ENCODE measurements at regions of chr17 and their contacts with region 1.

Region 1: GRCh38 chr17:47840740-47841603 is at the start of gene SCRN2:
- DNase-seq: no peak
- H3K4me3 ChIP-seq: peak within 1 kb of the TSS; percentile 69
- CTCF ChIP-seq: peak; percentile 95

Region 2: DNA sequence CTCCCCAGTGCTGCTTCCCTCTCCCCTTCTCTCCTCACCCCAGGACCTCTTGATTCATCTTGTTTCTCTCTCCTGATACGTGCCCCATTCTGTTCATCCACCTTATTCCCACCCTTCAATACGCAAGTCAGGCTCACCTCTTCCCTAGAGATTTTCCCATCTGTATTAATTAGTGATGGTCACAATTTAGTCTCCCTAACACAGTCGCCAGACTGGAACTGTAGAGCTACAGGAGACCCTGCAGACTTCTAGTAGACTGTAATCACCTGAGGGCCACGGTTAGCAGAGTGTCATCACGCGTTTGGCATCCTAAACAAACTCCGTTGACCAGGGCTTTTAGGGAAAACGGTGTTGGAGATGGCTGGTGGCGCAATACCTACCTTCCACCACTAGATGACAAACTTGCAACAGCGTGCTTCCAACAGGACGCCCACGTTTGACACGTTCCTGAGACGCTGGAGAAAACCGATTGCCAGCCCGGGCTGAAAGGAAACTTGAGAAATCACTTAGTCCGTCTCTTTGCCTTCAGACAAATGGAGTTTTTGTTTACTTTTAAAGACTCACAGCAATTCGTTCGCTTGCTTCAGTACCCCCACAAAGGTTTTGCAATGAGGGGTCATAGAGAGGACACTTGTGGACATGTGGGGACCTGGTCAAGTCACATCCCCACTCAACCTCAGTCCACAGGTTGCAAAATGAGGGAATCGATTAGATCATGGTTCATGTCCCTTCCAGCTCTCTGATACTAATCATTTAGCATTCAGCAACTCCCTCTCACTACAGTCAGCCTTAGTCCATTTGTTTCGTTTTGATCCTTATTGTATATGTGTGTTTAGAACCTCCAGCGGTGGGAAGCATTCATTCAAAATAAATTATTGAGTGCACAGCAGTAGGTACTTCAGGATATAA is 611.2 kb before region 1 on chr17:
- CTCF ChIA-PET with region 1: no interaction called
- POLR2A ChIA-PET with region 1: no interaction called
- DNase-seq: peak; percentile 79
- H3K4me3 ChIP-seq: peak overlapping the region; percentile 21; the same call in 1 of the 2 replicates
- CTCF ChIP-seq: peak; percentile 96

Region 3: DNA sequence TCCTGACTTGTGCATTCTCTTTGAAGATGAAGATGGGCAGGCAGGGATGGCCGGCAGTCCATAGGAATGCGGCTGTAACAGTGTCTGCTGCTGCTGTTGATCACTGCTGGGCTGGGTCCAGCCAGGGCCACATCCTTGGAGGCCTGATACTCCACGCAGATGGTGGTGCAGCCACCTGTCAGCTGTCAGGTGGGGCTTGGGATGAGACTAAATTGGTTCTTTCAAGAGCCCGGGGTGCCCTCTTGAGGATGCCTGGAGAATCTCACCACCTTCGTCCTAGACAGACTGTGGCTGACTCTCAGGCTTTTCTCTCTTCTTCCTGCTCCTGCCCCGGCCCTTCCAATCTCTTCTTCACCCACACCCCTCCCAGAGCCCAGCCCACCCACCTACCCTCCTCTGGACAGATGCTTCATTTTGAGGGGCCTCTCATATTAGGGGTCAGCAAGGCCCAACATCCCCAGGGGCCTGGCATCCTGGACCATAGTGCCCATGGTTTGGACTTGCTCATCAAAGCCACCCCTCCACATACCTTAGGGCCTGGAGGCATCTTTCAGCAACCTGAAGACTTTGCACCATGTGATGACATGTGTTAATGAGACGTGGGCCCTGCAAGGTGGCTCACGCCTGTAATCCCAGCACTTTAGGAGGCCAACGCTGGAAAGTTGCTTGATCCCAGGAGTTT is 38.5 kb before region 1 on chr17:
- CTCF ChIA-PET with region 1: no interaction called
- POLR2A ChIA-PET with region 1: no interaction called
- DNase-seq: no peak
- H3K4me3 ChIP-seq: no peak overlapping the region
- CTCF ChIP-seq: peak; percentile 69

Region 4: DNA sequence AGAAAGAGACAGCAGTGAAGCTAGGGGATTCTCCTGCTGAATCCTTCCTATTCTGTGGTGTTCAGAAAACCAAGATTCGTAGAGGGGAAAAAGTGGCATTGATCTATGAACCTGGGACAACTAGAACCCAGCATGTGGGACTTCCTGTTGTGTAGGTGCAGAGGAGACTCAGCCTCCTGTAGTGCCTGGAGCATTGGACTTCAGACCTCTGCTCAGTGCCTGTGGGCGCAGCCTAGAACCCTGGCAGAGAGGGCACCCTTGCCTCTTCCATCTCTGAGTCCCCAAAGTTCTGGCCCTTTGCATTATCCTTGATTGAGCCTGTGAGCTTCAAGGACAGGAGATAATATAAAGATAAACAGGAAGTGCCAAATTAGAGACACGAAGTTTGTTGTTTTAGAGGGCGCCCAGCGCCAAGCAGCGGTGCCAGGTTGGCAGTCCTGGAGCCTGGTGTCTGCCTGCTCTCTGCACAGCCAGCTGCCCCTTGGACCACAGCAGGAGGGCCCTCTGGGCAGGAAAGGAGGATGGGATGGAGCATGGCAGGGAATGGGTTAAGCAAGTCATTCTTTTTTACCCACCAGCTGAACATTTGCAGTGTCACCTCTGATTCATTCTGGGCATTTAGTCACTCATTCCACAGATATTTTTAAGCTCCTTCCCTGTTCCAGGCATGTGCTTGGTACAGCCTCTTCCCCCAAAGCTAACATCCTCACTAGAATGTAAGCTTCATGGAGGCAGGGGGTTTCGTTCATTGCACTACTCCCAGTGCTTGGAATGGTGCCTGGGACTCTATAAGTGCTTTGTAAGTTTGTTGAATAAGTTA is 21.9 kb after region 1 on chr17:
- CTCF ChIA-PET with region 1: interaction called, 208 read pairs
- POLR2A ChIA-PET with region 1: interaction called, 4 read pairs
- DNase-seq: peak; percentile 50
- H3K4me3 ChIP-seq: no peak overlapping the region
- CTCF ChIP-seq: no peak

Region 5: GRCh38 chr17:47882247-47882646 is 41.3 kb after region 1 on chr17:
- CTCF ChIA-PET with region 1: interaction called, 1,547 read pairs
- POLR2A ChIA-PET with region 1: no interaction called
- DNase-seq: no peak
- H3K4me3 ChIP-seq: no peak overlapping the region
- CTCF ChIP-seq: no peak

Region 6: DNA sequence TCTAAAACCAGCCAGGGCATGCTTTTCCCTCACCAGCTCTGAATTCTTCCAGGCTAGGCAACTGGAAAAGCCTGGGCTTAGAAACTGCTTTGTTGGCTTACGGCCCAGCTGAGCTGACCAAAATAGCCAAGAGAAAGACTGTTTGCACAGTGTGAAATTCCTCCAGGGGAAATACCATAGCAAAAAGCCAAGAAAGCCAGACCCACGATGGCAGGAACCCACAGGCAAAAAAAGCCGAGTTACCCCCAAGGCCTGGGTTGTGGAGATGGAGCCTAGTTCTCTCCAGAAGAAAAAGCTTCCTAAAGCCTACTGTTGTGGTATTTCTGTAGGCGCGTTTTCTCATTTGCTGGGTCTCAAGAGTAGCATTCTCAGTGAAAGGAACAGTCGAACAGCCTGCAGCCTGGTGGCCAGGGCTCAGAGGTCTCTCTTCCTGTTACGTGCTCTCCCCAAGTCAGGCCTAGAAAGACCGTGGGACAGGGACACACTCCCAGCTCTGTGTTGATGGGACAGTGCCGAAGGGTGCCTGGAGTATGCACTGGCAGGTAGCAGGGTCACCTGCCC is 64.3 kb after region 1 on chr17:
- CTCF ChIA-PET with region 1: interaction called, 13 read pairs
- POLR2A ChIA-PET with region 1: no interaction called
- DNase-seq: peak; percentile 54
- H3K4me3 ChIP-seq: no peak overlapping the region
- CTCF ChIP-seq: no peak

Region 7: DNA sequence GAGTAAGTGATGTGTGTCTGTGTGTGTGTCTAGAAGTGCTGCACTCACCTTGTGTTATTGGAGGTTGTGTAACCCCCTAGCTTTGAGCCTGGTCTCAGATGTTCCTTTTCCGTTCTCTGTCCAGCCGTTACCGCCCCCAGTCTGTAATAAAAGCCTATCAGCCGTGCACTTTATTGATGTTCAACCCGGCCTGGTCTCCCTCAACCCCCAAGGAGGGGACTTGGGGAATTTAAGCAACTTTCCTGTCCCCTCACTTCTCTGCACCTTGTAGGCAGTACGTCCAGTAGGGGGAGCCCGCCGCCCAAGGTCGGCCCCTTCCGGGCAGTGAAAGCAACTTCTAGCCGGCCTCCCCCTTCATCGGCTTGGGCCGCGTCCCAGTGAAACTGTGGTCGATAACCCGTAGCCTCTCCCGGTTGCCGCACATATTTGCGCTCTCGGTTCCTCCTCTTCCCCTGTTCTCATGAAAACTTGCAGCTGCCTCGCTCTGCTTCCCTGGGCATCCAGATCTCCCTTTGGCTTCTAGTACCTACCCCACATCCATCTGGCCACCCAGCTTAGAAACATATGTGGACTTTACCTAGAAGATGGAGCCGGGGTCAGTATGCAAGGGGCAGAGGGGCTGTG is 108.3 kb after region 1 on chr17:
- CTCF ChIA-PET with region 1: interaction called, 43 read pairs
- POLR2A ChIA-PET with region 1: no interaction called
- DNase-seq: no peak
- H3K4me3 ChIP-seq: peak overlapping the region; percentile 43
- CTCF ChIP-seq: peak; percentile 92

Region 8: GRCh38 chr17:48011405-48012150 is 170.6 kb after region 1 on chr17:
- CTCF ChIA-PET with region 1: interaction called, 114 read pairs
- POLR2A ChIA-PET with region 1: no interaction called
- DNase-seq: no peak
- H3K4me3 ChIP-seq: peak overlapping the region; percentile 54
- CTCF ChIP-seq: peak; percentile 68

Measured in AG04449 (cell line).